SK-N-SH (cell line): ENCODE measurements at regions of chr1 and their contacts with region 1.

Region 1: GRCh38 chr1:33094971-33095604 is 14.1 kb downstream of the AZIN2 start:
- DNase-seq: peak; percentile 68
- H3K4me3 ChIP-seq: no peak overlapping the region; a peak in 1 of 4 replicates
- H3K27ac ChIP-seq: peak overlapping the region in 1 of 2 experiments; percentile 14; a peak in 1 of 4 replicates
- H3K4me1 ChIP-seq: peaks cover 0 to 14% of the 10 kb centered on the region in 2 experiments; a peak in 1 of 4 replicates
- H3K27me3 ChIP-seq: no peaks in the 10 kb centered on the region
- CTCF ChIP-seq: peak; percentile 98
- EP300 ChIP-seq: no peak
- RAD21 ChIP-seq: peak; percentile 73

Region 2: GRCh38 chr1:33080885-33081553 is 14.1 kb before region 1 on chr1 and contains the start of gene AZIN2:
- CTCF ChIA-PET with region 1: interaction called, 37 read pairs
- POLR2A ChIA-PET with region 1: no interaction called
- DNase-seq: peak; percentile 98
- H3K4me3 ChIP-seq: peak within 1 kb of the TSS; percentile 73 to 75
- H3K27ac ChIP-seq: peak within 1 kb of the TSS in 1 of 2 experiments; percentile 60; a peak in 2 of 4 replicates
- H3K4me1 ChIP-seq: peaks cover 9 to 13% of the 10 kb centered on the region in 2 experiments; a peak in 2 of 4 replicates
- H3K27me3 ChIP-seq: no peaks in the 10 kb centered on the region
- CTCF ChIP-seq: no peak
- EP300 ChIP-seq: no peak
- RAD21 ChIP-seq: no peak
- polyA plus RNA-seq, gene AZIN2: 17.8 and 20.6 TPM in 2 replicates

Region 3: DNA sequence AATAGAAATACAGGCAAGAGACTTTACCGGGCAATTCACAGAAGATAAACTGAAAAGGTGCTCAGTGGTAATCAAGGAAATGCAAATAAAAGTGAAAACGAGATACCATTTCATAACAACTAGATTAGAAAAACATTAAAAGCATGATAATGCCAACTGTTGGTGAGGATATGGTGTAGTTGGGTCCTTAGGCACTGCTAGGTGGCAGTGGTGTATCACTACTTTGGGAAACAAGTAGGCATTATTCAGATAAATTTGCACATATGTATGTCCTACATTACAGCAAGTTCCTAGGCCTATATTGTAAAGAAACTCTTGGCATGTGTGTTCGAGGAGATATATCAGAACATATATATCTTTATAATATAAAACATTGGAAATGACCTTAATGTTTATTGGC is 16.9 kb after region 1 on chr1:
- CTCF ChIA-PET with region 1: interaction called, 17 read pairs
- POLR2A ChIA-PET with region 1: no interaction called
- DNase-seq: peak; percentile 18
- H3K4me3 ChIP-seq: no peak overlapping the region
- H3K27ac ChIP-seq: no peak overlapping the region
- H3K4me1 ChIP-seq: no peaks in the 10 kb centered on the region
- H3K27me3 ChIP-seq: no peaks in the 10 kb centered on the region
- CTCF ChIP-seq: peak; percentile 22; the same call in 1 of the 2 replicates
- EP300 ChIP-seq: no peak
- RAD21 ChIP-seq: peak; percentile 61